Heart right ventricle (tissue), 16 donors: ENCODE measurements at regions of chr18 and their contacts with region 1.

Region 1: DNA sequence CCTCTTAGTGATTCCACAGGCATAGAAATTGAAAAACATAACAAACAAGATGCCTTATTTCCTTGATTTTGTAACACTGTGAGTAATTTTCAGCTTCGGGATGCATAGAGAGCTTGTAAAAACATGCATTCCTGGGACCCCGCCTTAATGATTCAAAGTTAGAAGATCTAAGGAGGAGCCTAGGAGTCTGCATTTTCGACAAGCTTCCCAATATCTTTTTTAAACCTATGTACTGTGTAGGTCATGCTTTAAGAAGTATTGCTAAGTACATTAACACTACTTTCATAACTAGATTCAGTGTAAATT is 109.8 kb upstream of the ZNF516 start:
- DNase-seq: no peak
- ATAC-seq: no peak
- H3K4me3 ChIP-seq: no peak overlapping the region
- H3K27ac ChIP-seq: no peak overlapping the region
- H3K4me1 ChIP-seq: no peaks in the 10 kb centered on the region
- H3K27me3 ChIP-seq: peaks cover 0 to 16% (median 3%) of the 10 kb centered on the region in 7 donors
- CTCF ChIP-seq: no peak

Region 2: GRCh38 chr18:76546088-76546435 is 58.8 kb before region 1 on chr18:
- intact Hi-C with region 1: loop called in 1 of 10 experiments (anchors 10 kb)
- DNase-seq: no peak
- ATAC-seq: no peak
- H3K4me3 ChIP-seq: no peak overlapping the region
- H3K27ac ChIP-seq: peak overlapping the region in 1 of 10 donors; percentile 68
- H3K4me1 ChIP-seq: peaks cover 0 to 22% (median 0%) of the 10 kb centered on the region in 9 donors
- H3K27me3 ChIP-seq: peaks cover 0 to 13% (median 5%) of the 10 kb centered on the region in 7 donors
- CTCF ChIP-seq: no peak